CD8-positive, alpha-beta memory T cell (primary cell): ENCODE measurements at regions of chr6 and their contacts with region 1.

Region 1: DNA sequence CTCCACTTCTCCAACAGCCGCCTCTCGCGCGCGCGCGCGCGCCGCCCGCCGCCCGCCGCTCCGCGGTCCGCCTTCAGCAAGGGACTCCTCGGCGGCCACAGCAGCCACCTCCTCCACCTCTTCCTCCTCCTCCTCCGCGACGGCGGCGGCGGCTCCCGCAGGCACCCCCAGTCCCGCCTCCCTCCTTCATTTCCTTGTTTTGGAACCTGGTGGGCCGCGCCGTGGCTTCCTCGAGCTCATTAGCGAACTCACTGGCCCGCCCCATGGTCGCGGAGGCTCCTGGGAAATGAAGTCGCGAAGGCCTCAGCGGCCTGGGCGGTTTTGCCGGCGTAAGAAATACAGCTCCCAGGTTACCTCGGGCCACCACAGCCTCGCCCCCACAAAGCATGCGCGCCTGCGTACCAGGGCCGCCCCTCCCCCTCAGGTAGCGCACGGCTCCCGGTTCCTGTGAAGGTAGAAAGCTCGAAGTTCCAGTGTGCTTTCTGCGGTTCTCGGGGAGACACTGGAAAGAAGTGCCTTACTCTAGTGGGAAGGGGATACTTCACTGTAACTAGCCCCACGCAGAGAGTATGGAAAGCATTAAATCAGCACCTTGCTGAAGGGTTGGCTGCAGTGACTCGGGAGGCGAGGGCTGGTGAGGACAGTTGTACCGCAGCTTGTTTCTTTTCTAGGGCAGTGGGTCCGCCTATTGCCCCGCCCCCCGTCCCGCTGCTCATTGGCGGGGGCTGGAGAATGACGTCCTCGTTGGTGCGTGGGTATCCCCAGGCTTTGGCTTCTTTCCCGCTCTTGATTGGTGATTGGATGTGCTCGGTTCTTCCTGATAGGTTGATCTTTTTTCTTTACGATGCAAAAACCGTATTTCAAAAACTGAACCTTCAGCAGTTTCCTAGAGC is at the start of gene CDK19:
- DNase-seq: peak; percentile 98 to 99 (median 99)
- H3K4me3 ChIP-seq: peak within 1 kb of the TSS; percentile 73
- H3K4me3 Mint-ChIP-seq: peak within 1 kb of the TSS; percentile 92 to 100 (median 97)
- H3K27ac ChIP-seq: peak within 1 kb of the TSS; percentile 78
- H3K27ac Mint-ChIP-seq: peak within 1 kb of the TSS; percentile 97 to 100 (median 99)
- H3K4me1 ChIP-seq: peaks cover 22% of the 10 kb centered on the region
- H3K4me1 Mint-ChIP-seq: peaks cover 20 to 37% (median 28%) of the 10 kb centered on the region in 3 donors
- H3K27me3 ChIP-seq: no peaks in the 10 kb centered on the region
- H3K27me3 Mint-ChIP-seq: no peaks in the 10 kb centered on the region
- total RNA-seq, gene CDK19: 8.4 to 9.1 TPM

Region 2: GRCh38 chr6:110958329-110959192 is 143.1 kb after region 1 on chr6 and contains the start of gene GTF3C6:
- CTCF ChIA-PET with region 1: interaction called, 7 read pairs
- POLR2A ChIA-PET with region 1: interaction called, 23 read pairs
- DNase-seq: peak; percentile 89 to 95 (median 90)
- H3K4me3 ChIP-seq: peak within 1 kb of the TSS; percentile 99
- H3K4me3 Mint-ChIP-seq: peak within 1 kb of the TSS; percentile 95 to 100 (median 98)
- H3K27ac ChIP-seq: peak within 1 kb of the TSS; percentile 93
- H3K27ac Mint-ChIP-seq: peak within 1 kb of the TSS; percentile 73 to 99 (median 98)
- H3K4me1 ChIP-seq: peaks cover 13% of the 10 kb centered on the region
- H3K4me1 Mint-ChIP-seq: peaks cover 13 to 25% (median 21%) of the 10 kb centered on the region in 3 donors
- H3K27me3 ChIP-seq: no peaks in the 10 kb centered on the region
- H3K27me3 Mint-ChIP-seq: peaks cover 6 to 13% of the 10 kb centered on the region in 2 donors
- total RNA-seq, gene GTF3C6: 162 to 163 TPM

Region 3: DNA sequence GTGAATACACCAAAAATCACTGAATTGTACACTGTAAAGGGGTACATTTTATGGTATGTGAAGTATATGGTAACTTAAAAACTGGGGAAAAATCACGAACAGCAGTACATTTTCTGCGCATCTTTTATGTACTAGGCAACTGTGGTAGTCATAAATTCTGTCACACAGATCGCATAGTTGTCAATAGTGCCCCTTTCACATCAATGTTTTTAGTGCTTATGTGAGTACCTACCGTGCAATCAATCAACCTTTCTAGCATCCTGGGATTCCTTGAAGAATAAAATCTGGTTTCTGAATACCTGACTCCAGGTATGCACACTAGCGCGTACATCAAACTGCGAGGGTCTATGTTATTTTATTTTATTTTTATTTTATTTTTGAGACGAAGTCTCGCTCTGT is 165.7 kb after region 1 on chr6:
- CTCF ChIA-PET with region 1: interaction called, 3 read pairs
- POLR2A ChIA-PET with region 1: interaction called, 15 read pairs
- DNase-seq: no peak
- H3K4me3 ChIP-seq: peak overlapping the region; percentile 95
- H3K4me3 Mint-ChIP-seq: peak overlapping the region; percentile 97 to 99 (median 99)
- H3K27ac ChIP-seq: peak overlapping the region; percentile 93
- H3K27ac Mint-ChIP-seq: peak overlapping the region; percentile 96 to 100 (median 99)
- H3K4me1 ChIP-seq: peaks cover 10% of the 10 kb centered on the region
- H3K4me1 Mint-ChIP-seq: peaks cover 33 to 57% (median 53%) of the 10 kb centered on the region in 3 donors
- H3K27me3 ChIP-seq: no peaks in the 10 kb centered on the region
- H3K27me3 Mint-ChIP-seq: peaks cover 0 to 3% of the 10 kb centered on the region in 2 donors